CD4-positive, alpha-beta memory T cell (primary cell): ENCODE measurements at regions of chr6 and their contacts with region 1.

Region 1: GRCh38 chr6:87701676-87702588 is at the start of gene AKIRIN2:
- DNase-seq: peak; percentile 97 to 99 (median 99)
- H3K4me3 ChIP-seq: peak within 1 kb of the TSS; percentile 57 to 91
- H3K4me3 Mint-ChIP-seq: peak within 1 kb of the TSS; percentile 94 to 99 (median 96)
- H3K27ac ChIP-seq: peak within 1 kb of the TSS; percentile 93
- H3K27ac Mint-ChIP-seq: peak within 1 kb of the TSS; percentile 89 to 97 (median 97)
- H3K4me1 ChIP-seq: peaks cover 39% of the 10 kb centered on the region
- H3K4me1 Mint-ChIP-seq: peaks cover 24 to 58% (median 34%) of the 10 kb centered on the region in 4 donors
- H3K27me3 ChIP-seq: no peaks in the 10 kb centered on the region
- H3K27me3 Mint-ChIP-seq: no peaks in the 10 kb centered on the region
- total RNA-seq, gene AKIRIN2: 68.6 to 69.8 TPM

Region 2: DNA sequence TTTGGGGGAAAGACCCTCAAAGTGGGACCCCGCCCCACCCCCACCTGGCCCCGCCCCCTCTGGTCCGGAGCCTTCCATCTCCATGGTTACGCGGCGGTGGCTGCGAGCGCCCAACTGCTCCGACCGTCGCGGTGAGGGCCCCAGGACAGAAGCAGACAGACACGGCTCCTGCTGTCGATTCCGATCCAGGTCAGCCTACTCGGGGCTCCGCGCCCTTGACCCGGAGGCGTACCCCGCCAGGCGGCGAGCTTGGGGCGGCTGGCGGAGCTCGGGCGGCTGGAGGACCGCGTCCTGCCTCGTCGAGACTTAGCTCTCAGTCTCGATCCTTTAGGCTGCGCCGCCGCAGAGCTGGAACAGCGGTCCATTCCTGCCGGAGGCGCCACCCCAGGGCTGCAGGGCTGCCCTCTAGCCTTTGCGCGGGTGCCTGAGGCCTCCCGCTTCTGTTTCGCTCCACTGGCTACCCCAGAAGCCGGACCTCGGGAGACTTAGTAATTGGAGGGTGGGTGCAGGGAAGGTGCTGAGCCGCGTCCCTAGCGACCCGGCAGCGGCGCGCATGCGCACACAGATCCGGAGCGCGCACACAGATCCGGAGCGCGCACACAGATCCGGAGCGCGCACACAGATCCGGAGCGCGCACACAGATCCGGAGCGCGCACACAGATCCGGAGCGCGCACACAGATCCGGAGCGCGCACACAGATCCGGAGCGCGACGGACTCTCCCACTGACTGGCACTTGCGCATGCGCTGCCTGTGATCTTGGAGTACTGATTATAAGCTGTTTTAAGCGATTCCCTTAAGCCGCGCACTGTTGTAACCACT is 293.8 kb before region 1 on chr6 and contains the start of gene CFAP206:
- CTCF ChIA-PET with region 1: no interaction called
- POLR2A ChIA-PET with region 1: no interaction called
- intact Hi-C with region 1: loop called (anchors 5 kb)
- DNase-seq: peak; percentile 79 to 88 (median 85)
- H3K4me3 ChIP-seq: peak within 1 kb of the TSS; percentile 75 to 84
- H3K4me3 Mint-ChIP-seq: peak within 1 kb of the TSS; percentile 88 to 96 (median 89)
- H3K27ac ChIP-seq: peak within 1 kb of the TSS; percentile 67
- H3K27ac Mint-ChIP-seq: peak within 1 kb of the TSS; percentile 83 to 93 (median 89)
- H3K4me1 ChIP-seq: peaks cover 11% of the 10 kb centered on the region
- H3K4me1 Mint-ChIP-seq: peaks cover 4 to 13% (median 5%) of the 10 kb centered on the region in 4 donors
- H3K27me3 ChIP-seq: no peaks in the 10 kb centered on the region
- H3K27me3 Mint-ChIP-seq: peaks cover 4 to 10% of the 10 kb centered on the region in 2 donors
- total RNA-seq, gene CFAP206: 0.25 TPM in 1 of 2 experiments, not detected in the other

Region 3: DNA sequence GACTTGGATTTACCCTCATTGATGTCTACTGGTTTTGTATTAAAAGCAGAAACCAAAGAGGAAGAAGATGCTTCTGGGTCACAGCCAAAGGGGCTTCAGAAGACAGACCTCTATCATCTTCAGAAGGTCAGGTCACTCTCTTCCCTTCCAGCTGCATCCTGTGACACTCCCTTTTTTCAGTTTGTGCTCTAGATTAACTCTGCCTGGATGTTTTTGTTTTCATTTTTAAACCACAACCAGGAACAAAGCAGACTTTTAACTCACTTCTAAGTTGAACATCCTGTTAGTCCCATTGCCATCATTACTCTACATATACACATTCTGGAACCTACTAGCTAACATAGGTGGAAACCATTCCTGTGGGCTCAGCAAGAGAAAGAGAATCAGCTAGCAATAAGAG is 45.1 kb before region 1 on chr6:
- CTCF ChIA-PET with region 1: interaction called, 3 read pairs
- POLR2A ChIA-PET with region 1: interaction called, 6 read pairs
- intact Hi-C with region 1: loop called (anchors 5 kb)
- DNase-seq: peak in 4 of 5 donors; percentile 7 to 40 (median 30)
- H3K4me3 ChIP-seq: no peak overlapping the region
- H3K4me3 Mint-ChIP-seq: peak overlapping the region in 7 of 8 donors; percentile 7 to 63 (median 33)
- H3K27ac ChIP-seq: no peak overlapping the region
- H3K27ac Mint-ChIP-seq: peak overlapping the region in 6 of 7 donors; percentile 17 to 81 (median 56)
- H3K4me1 ChIP-seq: peaks cover 34% of the 10 kb centered on the region
- H3K4me1 Mint-ChIP-seq: peaks cover 14 to 52% (median 35%) of the 10 kb centered on the region in 4 donors
- H3K27me3 ChIP-seq: no peaks in the 10 kb centered on the region
- H3K27me3 Mint-ChIP-seq: no peaks in the 10 kb centered on the region

Region 4: DNA sequence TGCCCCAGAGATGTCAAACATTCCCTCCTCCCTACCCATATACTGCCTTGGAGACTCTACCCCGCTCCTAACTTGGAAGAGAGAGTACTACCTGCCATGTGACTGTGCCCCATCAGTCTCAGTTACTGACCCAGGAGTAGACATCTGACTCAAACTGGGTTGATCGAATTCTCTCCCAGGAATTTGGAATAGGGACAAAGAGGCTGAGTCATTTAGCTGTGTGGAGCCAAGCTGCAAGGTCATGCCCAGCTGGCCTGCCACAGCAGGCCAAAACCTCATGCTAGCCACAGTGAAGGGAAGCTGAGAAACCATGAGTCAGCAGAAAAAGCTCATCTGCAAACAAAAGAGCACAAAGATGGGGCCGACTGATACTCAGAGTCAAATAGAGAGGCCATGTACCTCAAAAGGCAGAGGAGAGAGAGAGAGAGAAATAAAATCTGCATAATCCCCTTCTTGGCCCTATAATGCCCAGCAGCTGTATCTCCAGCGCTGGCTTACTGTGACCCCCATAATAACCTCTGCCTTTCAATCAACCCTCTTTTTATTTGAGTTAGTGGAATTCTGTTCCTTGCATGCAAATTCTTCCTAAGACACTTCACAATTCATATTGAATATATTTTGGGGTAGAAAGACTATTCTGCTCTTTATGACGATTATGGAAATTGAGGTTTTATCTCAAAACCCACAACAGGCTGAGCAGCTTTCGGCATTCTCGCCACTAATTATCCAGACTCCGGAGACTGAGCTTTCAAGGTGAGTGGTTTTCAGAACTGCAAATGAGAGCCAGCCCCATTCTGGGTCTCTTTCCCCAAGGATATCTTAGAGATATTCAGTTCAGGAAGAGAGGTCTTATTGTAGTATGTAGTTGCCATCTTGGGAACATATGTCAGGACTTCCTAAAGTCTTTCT is 21.5 kb after region 1 on chr6:
- CTCF ChIA-PET with region 1: interaction called, 4 read pairs
- POLR2A ChIA-PET with region 1: interaction called, 52 read pairs
- intact Hi-C with region 1: loop called (anchors 2 kb)
- DNase-seq: no peak
- H3K4me3 ChIP-seq: no peak overlapping the region
- H3K4me3 Mint-ChIP-seq: peak overlapping the region in 5 of 8 donors; percentile 4 to 37 (median 13)
- H3K27ac ChIP-seq: no peak overlapping the region
- H3K27ac Mint-ChIP-seq: peak overlapping the region in 3 of 7 donors; percentile 14 to 47 (median 26)
- H3K4me1 ChIP-seq: peaks cover 40% of the 10 kb centered on the region
- H3K4me1 Mint-ChIP-seq: peaks cover 24 to 46% (median 34%) of the 10 kb centered on the region in 4 donors
- H3K27me3 ChIP-seq: no peaks in the 10 kb centered on the region
- H3K27me3 Mint-ChIP-seq: no peaks in the 10 kb centered on the region

Region 5: GRCh38 chr6:87756858-87757257 is 54.9 kb after region 1 on chr6:
- CTCF ChIA-PET with region 1: no interaction called
- POLR2A ChIA-PET with region 1: interaction called, 12 read pairs
- intact Hi-C with region 1: no loop called
- DNase-seq: peak in 1 of 5 donors; percentile 39
- H3K4me3 ChIP-seq: no peak overlapping the region
- H3K4me3 Mint-ChIP-seq: peak overlapping the region in 2 of 8 donors; percentile 25 to 58
- H3K27ac ChIP-seq: no peak overlapping the region
- H3K27ac Mint-ChIP-seq: peak overlapping the region in 4 of 7 donors; percentile 39 to 72 (median 49)
- H3K4me1 ChIP-seq: peaks cover 12% of the 10 kb centered on the region
- H3K4me1 Mint-ChIP-seq: peaks cover 5 to 10% (median 8%) of the 10 kb centered on the region in 4 donors
- H3K27me3 ChIP-seq: no peaks in the 10 kb centered on the region
- H3K27me3 Mint-ChIP-seq: no peaks in the 10 kb centered on the region